ENCODE measurements at regions of chr18 and their contacts with region 1.

Region 1: DNA sequence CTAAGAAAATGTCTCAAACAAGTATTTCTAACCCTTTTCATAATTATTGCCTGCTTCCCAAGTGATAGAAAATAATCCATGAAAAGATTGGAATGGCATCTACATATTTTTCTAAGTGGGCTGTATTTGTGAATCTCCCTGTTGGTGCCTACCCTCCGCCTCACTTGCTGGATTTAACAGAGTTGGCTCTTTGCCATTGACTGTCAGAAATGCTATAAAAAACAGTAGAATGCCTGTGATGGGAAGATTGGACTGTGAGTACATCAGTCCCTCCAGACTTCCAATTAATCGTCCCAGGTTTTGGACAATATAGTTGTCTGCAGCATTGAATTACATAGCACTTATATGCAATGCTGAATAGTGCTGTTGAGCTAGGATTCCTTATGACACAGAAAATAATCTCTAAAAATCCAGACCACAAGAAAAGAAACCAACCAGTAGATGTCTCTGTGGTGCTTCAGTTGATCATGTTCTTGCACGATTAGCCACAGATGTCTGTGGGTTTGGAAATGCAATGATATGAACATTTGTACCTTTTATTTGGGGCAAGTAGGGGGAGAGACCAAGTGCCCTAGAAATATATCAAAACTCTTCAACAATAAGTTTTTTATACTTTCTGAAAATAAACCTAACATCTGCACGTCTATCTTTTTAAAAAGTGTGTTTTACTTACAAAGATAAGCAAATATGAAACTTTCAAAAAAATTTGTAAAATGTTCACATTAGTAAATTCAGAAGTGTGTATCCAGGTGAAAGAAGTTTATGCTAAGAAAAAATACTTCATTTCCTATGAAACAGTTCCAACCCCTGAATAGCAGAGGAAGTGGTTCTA is 88.5 kb downstream of the DYNAP start:
- DNase-seq: peak in 1 of 6 donors; percentile 18
- ATAC-seq: peak; percentile 77 to 97 (median 96)
- H3K4me3 ChIP-seq: no peak overlapping the region
- H3K27ac ChIP-seq: no peak overlapping the region
- H3K4me1 ChIP-seq: peaks cover 0 to 5% (median 0%) of the 10 kb centered on the region in 3 donors
- H3K27me3 ChIP-seq: no peaks in the 10 kb centered on the region
- CTCF ChIP-seq: peak in 2 of 4 donors; percentile 24 to 34

Region 2: DNA sequence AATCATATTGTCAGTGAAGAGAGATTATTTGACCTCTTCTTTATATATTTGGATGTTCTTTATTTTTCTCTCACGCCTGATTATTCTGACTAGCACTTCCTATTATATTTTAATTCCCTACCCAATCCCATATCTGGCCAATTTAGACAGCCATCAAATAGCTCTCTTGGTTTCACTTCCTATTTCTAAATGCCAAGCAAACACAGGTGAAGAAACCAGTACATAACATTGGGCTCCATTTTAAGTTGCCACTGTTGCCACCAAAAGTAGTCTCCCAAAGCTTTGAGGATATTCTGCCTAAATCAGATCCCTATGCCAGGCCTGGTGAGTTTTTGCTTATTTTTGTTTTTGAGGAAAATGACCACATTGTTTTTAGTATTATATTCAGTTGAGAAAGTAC is 1002.1 kb before region 1 on chr18:
- intact Hi-C with region 1: no loop called
- DNase-seq: no peak
- ATAC-seq: no peak
- H3K4me3 ChIP-seq: no peak overlapping the region
- H3K27ac ChIP-seq: no peak overlapping the region
- H3K4me1 ChIP-seq: no peaks in the 10 kb centered on the region
- H3K27me3 ChIP-seq: no peaks in the 10 kb centered on the region
- CTCF ChIP-seq: no peak

Region 3: DNA sequence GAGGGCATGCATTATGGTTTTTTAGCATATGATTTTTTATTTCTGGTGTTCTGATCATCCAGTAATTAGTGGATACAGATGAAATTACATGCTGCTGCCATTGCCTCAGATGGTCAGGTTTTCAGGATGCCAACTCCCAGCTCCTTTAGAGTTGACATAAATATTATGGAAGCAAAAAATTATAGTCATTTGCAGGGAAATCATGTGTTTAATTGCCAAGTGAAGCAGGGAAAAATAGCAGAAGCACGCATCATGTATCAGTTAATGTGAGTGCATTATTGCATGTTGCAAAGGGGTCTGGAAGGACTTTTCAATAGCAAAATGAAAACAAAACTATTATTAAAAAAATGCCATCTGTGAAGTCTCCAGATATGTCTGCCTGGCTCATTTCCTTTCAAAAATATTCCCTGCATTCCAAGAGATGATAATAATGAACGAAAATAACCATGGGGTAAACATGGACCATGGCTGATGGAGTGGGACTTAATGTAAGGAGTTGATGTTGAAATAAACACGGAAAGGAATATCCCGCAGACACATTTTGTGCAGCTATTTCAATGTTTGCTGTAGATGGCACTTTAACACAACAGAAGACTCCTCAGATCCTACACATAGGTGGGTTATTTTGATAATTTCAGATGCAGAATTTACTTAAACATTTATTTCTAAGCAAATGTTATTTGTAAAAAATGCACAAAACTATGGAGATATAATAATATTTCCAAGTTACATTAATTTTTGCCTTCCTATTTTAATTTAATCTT is 176.2 kb before region 1 on chr18:
- intact Hi-C with region 1: no loop called
- DNase-seq: no peak
- ATAC-seq: no peak
- H3K4me3 ChIP-seq: no peak overlapping the region
- H3K27ac ChIP-seq: no peak overlapping the region
- H3K4me1 ChIP-seq: no peaks in the 10 kb centered on the region
- H3K27me3 ChIP-seq: no peaks in the 10 kb centered on the region
- CTCF ChIP-seq: no peak

Region 4: DNA sequence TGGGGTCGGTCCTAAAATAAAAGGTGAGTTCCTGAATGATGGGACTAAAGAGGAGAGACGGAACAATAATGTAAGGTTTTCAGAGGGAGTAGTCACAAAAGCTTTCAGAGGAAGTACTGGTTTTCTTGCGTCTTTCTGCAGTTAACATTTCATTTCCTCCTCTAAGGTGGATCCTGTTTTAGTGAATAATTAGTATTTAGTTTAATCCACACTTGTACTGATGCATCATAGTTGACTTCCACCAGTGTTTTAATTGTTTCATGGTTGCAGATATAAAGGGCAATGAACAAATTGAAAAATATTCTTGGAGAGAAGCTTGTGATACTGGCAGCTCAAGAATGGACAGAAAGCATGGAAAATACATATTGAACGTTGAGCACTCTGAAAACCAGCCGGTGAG is 88.6 kb before region 1 on chr18 and contains the start of gene DYNAP:
- intact Hi-C with region 1: no loop called
- DNase-seq: no peak
- ATAC-seq: no peak
- H3K4me3 ChIP-seq: no peak within 1 kb of the TSS
- H3K27ac ChIP-seq: no peak within 1 kb of the TSS
- H3K4me1 ChIP-seq: no peaks in the 10 kb centered on the region
- H3K27me3 ChIP-seq: no peaks in the 10 kb centered on the region
- CTCF ChIP-seq: no peak
- total RNA-seq, gene DYNAP: not detected

Region 5: DNA sequence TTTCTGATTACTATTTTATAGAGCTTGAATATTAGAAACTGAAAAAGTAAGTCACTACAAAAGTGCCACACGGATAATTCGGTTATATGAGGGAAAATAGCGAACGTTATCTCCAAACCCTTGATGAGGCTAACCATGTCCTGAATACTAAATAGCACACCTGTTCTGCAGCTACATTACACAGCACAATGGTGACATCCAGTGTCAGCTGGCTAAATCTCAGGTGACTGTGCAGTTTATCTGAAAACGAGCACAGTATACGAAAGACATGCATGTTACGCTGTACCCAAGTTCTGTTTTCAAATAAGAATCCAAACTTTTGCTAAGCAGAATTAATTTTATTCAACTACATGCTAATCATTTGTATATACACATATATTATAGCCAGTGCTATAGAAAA is 270.7 kb after region 1 on chr18:
- intact Hi-C with region 1: loop called in 2 of 3 experiments (anchors 5 to 10 kb)
- DNase-seq: peak in 3 of 6 donors; percentile 48 to 67 (median 52)
- ATAC-seq: peak; percentile 81 to 89 (median 83)
- H3K4me3 ChIP-seq: no peak overlapping the region
- H3K27ac ChIP-seq: peak overlapping the region in 1 of 4 donors; percentile 27
- H3K4me1 ChIP-seq: peaks cover 9 to 46% (median 31%) of the 10 kb centered on the region in 3 donors
- H3K27me3 ChIP-seq: no peaks in the 10 kb centered on the region
- CTCF ChIP-seq: peak in 3 of 4 donors; percentile 13 to 34 (median 23)

Region 6: GRCh38 chr18:54958657-54959625 is 279.4 kb after region 1 on chr18 and contains the start of gene CCDC68:
- intact Hi-C with region 1: loop called in 2 of 3 experiments (anchors 5 to 10 kb)
- DNase-seq: peak; percentile 68 to 90 (median 80)
- ATAC-seq: peak; percentile 98 to 99 (median 99)
- H3K4me3 ChIP-seq: peak within 1 kb of the TSS; percentile 32 to 56 (median 46)
- H3K27ac ChIP-seq: peak within 1 kb of the TSS in 3 of 4 donors; percentile 39 to 67 (median 61)
- H3K4me1 ChIP-seq: peaks cover 0 to 8% (median 4%) of the 10 kb centered on the region in 3 donors
- H3K27me3 ChIP-seq: no peaks in the 10 kb centered on the region
- CTCF ChIP-seq: no peak
- total RNA-seq, gene CCDC68: 0.79 to 5.0 (median 1.2) TPM

Region 7: DNA sequence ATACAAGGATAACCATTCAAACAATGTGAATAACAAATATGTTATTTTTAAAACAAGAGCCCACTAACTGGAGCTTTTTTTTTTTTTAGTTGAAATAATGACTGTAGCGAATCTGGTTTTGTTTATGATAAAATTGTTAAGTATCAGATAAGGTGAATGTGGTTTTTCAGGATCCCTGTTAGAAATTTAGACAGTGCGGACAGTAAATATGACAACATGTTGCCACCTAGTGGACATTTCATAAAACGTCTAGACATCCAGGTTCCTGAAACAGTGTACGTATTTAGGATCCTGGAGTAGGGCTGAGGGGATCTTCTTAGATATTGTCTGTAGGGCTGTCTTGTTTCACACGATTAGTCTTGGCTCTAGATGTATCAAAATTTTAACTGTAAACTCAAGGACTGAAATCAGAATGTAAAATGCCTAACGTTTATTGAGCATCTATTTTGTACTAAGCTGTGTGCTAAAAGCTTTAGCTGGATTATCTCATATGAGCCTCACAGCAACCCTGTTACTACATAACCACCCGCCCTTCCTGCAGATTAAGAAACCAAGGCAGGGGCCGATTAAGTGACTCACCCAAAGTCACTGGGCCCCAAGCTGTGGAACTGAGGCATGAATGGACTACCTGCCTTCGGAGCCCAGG is 303.6 kb after region 1 on chr18:
- intact Hi-C with region 1: loop called in 1 of 3 experiments (anchors 10 kb)
- DNase-seq: no peak
- ATAC-seq: peak; percentile 48 to 86 (median 84)
- H3K4me3 ChIP-seq: no peak overlapping the region
- H3K27ac ChIP-seq: no peak overlapping the region
- H3K4me1 ChIP-seq: no peaks in the 10 kb centered on the region
- H3K27me3 ChIP-seq: no peaks in the 10 kb centered on the region
- CTCF ChIP-seq: peak; percentile 27 to 70 (median 57)

Measured in pancreas (tissue), 10 donors.